Activated T-helper 2 cell treated with anti-CD3 and anti-CD28 coated beads, Interferon-gamma antibody, Interleukin-2, Interleukin-4, amounts not matched to agents 10 μg/mL and 5 μg/mL and 100 μg/mL, durations not matched to agents 14 hours and 24 hours and 36 hours (primary cell): ENCODE measurements at regions of chr9 and their contacts with region 1.

Region 1: DNA sequence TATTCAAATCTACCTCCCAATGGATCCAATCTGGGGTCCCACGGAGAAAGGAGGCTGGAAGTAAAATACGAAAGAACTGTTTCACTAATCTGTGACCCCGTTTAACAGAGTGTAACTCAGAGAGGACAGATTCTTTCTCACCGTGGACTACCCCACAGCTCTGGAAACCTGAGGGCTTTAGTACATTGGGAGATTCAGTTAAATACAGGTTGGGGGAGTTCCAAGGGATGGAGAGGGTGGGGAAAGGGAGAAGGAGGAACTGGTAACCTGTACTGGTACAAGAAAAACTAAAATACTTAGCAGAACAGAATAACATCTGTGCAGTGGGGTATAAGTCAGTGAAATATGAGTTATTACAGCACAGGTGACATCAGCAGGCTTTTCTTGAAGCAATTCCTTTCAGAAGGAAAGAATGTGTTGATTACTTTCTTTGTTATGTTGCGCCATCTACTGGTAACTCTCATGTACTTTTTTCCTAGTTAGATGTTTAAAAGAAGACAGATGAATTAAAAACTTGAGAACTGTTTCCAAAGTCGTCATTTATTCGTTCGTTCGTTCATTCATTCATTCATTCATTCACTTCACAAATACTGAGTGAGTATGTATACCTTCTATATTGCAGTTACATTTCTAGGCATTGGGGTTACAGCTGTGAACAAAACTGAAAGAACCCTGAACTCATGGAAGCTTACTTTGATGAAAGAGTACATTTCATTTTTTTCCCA is 30.0 kb upstream of the STOM start:
- DNase-seq: no peak
- H3K4me3 Mint-ChIP-seq: no peak overlapping the region
- H3K27ac Mint-ChIP-seq: no peak overlapping the region
- H3K4me1 Mint-ChIP-seq: no peaks in the 10 kb centered on the region
- H3K27me3 Mint-ChIP-seq: peaks cover 16% of the 10 kb centered on the region

Region 2: GRCh38 chr9:121213136-121213806 is 186.8 kb before region 1 on chr9:
- intact Hi-C with region 1: loop called (anchors 2 kb)
- DNase-seq: peak; percentile 53
- H3K4me3 Mint-ChIP-seq: no peak overlapping the region
- H3K27ac Mint-ChIP-seq: peak overlapping the region; percentile 40
- H3K4me1 Mint-ChIP-seq: peaks cover 17% of the 10 kb centered on the region
- H3K27me3 Mint-ChIP-seq: no peaks in the 10 kb centered on the region

Region 3: GRCh38 chr9:121278535-121279261 is 121.3 kb before region 1 on chr9:
- intact Hi-C with region 1: loop called (anchors 5 kb)
- DNase-seq: peak; percentile 22
- H3K4me3 Mint-ChIP-seq: no peak overlapping the region
- H3K27ac Mint-ChIP-seq: no peak overlapping the region
- H3K4me1 Mint-ChIP-seq: peaks cover 9% of the 10 kb centered on the region
- H3K27me3 Mint-ChIP-seq: peaks cover 4% of the 10 kb centered on the region

Region 4: GRCh38 chr9:121322037-121322775 is 77.8 kb before region 1 on chr9:
- intact Hi-C with region 1: loop called (anchors 1 kb)
- DNase-seq: no peak
- H3K4me3 Mint-ChIP-seq: no peak overlapping the region
- H3K27ac Mint-ChIP-seq: no peak overlapping the region
- H3K4me1 Mint-ChIP-seq: peaks cover 17% of the 10 kb centered on the region
- H3K27me3 Mint-ChIP-seq: no peaks in the 10 kb centered on the region

Region 5: GRCh38 chr9:121434969-121435368 is 34.9 kb after region 1 on chr9:
- intact Hi-C with region 1: no loop called
- DNase-seq: no peak
- H3K4me3 Mint-ChIP-seq: no peak overlapping the region
- H3K27ac Mint-ChIP-seq: no peak overlapping the region
- H3K4me1 Mint-ChIP-seq: no peaks in the 10 kb centered on the region
- H3K27me3 Mint-ChIP-seq: peaks cover 32% of the 10 kb centered on the region